Activated naive CD4-positive, alpha-beta T cell treated with anti-CD3 and anti-CD28 coated beads for 36 hours (primary cell): ENCODE measurements at regions of chr17 and their contacts with region 1.

Region 1: GRCh38 chr17:42405963-42406495 is 17.0 kb downstream of the CAVIN1 start:
- DNase-seq: peak; percentile 90
- H3K4me3 Mint-ChIP-seq: no peak overlapping the region
- H3K27ac Mint-ChIP-seq: no peak overlapping the region
- H3K4me1 Mint-ChIP-seq: peaks cover 22% of the 10 kb centered on the region
- H3K27me3 Mint-ChIP-seq: no peaks in the 10 kb centered on the region

Region 2: GRCh38 chr17:42120770-42121769 is 285.0 kb before region 1 on chr17 and contains the start of gene KAT2A:
- CTCF ChIA-PET with region 1: interaction called, 3 read pairs
- intact Hi-C with region 1: loop called (anchors 1 kb)
- DNase-seq: peak; percentile 80
- H3K4me3 Mint-ChIP-seq: peak within 1 kb of the TSS; percentile 59
- H3K27ac Mint-ChIP-seq: peak within 1 kb of the TSS; percentile 72
- H3K4me1 Mint-ChIP-seq: peaks cover 28% of the 10 kb centered on the region
- H3K27me3 Mint-ChIP-seq: no peaks in the 10 kb centered on the region
- total RNA-seq, gene KAT2A: 57.3 to 59.0 TPM

Region 3: GRCh38 chr17:42248351-42249179 is 157.5 kb before region 1 on chr17:
- CTCF ChIA-PET with region 1: interaction called, 10 read pairs
- intact Hi-C with region 1: no loop called
- DNase-seq: peak; percentile 92
- H3K4me3 Mint-ChIP-seq: peak overlapping the region; percentile 74
- H3K27ac Mint-ChIP-seq: peak overlapping the region; percentile 97
- H3K4me1 Mint-ChIP-seq: peaks cover 71% of the 10 kb centered on the region
- H3K27me3 Mint-ChIP-seq: no peaks in the 10 kb centered on the region

Region 4: DNA sequence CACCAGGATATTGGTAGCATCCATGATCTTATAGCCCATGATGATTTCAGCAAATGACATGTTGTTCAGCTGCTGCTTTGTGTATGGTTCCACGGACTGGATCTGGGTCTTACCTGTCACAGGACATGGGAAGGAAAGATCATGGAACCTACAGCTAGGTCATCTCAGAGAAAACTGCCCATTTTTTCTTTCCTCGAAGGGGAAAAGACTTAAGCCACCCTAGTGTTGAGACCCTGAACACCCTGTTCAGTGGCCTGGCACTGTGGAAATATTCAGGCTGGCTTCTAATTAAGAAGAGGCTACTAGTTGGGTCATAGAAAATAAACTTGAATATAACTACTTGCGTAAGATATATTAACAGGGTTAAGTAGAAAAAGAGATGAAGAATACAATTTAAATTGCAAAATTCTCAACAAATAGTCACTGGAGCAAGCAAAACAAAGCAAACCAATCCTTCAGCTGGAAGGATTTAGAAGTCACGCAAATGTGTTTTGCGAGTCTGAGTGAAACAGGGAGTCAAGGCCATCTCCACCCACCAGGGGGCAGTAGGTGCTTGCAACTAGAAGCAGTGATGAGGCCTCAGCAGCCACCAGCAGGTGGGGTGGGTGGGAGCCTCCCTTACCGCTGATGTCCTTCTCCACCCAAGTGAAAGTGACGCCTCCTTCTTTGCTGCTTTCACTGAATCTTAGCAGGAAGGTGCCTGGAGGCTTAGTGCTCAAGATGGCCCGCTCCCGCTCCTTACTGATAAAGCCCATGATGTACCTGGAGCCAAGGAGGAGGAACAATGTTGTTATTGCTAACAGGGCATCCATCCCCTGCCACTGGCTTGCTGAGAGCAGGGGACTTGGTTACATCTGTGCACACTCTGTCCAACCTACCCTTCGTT is 83.4 kb before region 1 on chr17:
- CTCF ChIA-PET with region 1: interaction called, 442 read pairs
- intact Hi-C with region 1: loop called (anchors 1 kb)
- DNase-seq: peak; percentile 99
- H3K4me3 Mint-ChIP-seq: peak overlapping the region; percentile 9
- H3K27ac Mint-ChIP-seq: peak overlapping the region; percentile 81
- H3K4me1 Mint-ChIP-seq: peaks cover 55% of the 10 kb centered on the region
- H3K27me3 Mint-ChIP-seq: no peaks in the 10 kb centered on the region

Region 5: GRCh38 chr17:42388381-42389134 is 17.5 kb before region 1 on chr17 and contains the start of gene STAT3:
- CTCF ChIA-PET with region 1: interaction called, 59 read pairs
- intact Hi-C with region 1: no loop called
- DNase-seq: peak; percentile 100
- H3K4me3 Mint-ChIP-seq: peak within 1 kb of the TSS; percentile 97
- H3K27ac Mint-ChIP-seq: peak within 1 kb of the TSS; percentile 100
- H3K4me1 Mint-ChIP-seq: peaks cover 47% of the 10 kb centered on the region
- H3K27me3 Mint-ChIP-seq: no peaks in the 10 kb centered on the region
- total RNA-seq, gene STAT3: 404 to 408 TPM